Breast epithelium (tissue), 4 donors: ENCODE measurements at regions of chr9 and their contacts with region 1.

Region 1: DNA sequence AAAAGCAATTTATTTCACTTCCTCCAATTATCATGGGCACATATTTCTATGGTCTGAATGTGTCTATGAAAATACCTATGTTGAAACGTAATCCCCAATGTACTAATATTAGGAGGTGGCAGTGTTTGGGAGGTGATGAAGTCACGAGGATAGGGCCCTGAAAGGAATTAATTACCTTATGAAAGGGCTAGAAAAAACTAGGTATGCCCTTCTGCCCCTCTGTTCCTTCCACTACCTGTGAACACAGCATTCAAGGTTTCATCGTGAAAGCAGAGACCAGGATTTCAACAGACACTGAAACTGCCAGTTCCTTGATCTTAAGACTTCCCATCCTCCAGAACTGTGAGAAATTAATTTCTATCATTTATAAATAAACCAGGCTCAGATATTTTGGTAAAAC is 1037.1 kb upstream of the C9orf72 start:
- DNase-seq: no peak
- H3K4me3 ChIP-seq: no peak overlapping the region
- H3K27ac ChIP-seq: no peak overlapping the region
- H3K4me1 ChIP-seq: no peaks in the 10 kb centered on the region
- H3K27me3 ChIP-seq: no peaks in the 10 kb centered on the region
- CTCF ChIP-seq: no peak
- POLR2A ChIP-seq: no peak

Region 2: DNA sequence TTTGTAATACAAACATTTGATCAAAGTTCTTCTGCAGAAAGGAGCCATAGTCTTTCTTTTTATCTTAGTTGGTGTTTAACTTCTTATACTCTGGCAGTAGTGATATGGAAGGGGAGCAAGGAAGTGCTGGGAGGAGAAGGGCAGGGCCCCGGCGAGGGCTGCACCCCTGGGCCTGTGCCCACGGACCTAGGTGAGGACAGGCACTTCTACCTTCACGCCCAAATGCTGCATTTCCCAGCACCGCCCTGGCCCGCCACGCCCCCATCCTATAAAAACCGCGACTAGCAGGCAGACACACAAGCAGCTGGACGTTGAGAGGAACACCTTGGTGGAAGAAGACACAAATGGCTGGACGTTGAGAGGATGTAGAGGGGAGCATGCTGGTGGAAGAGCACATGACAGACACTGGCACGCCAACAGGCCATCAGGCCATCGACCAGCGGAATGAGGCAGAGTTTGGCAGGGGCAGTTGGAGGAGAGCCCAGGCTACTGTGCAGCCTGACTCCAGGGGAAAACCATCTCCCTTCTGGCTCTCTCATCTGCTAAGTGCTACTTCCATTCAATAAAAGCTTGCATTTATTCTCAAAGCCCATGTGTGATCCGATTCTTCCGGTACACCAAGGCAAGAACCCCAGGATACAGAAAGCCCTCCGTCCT is 955.6 kb before region 1 on chr9:
- intact Hi-C with region 1: loop called (anchors 5 kb)
- DNase-seq: no peak
- H3K4me3 ChIP-seq: no peak overlapping the region
- H3K27ac ChIP-seq: no peak overlapping the region
- H3K4me1 ChIP-seq: no peaks in the 10 kb centered on the region
- H3K27me3 ChIP-seq: no peaks in the 10 kb centered on the region
- CTCF ChIP-seq: no peak
- POLR2A ChIP-seq: no peak